HepG2 (cell line): ENCODE measurements at regions of chr17 and their contacts with region 1.

Region 1: GRCh38 chr17:31100840-31101459 is 6.2 kb downstream of the NF1 start:
- DNase-seq: no peak
- ATAC-seq: no peak
- H3K4me3 ChIP-seq: no peak overlapping the region
- H3K27ac ChIP-seq: no peak overlapping the region
- H3K4me1 ChIP-seq: peaks cover 21% of the 10 kb centered on the region
- H3K27me3 ChIP-seq: no peaks in the 10 kb centered on the region
- CTCF ChIP-seq: no peak
- EP300 ChIP-seq: no peak
- POLR2A ChIP-seq: no peak
- RAD21 ChIP-seq: no peak

Region 2: GRCh38 chr17:31068291-31068690 is 32.7 kb before region 1 on chr17:
- CTCF ChIA-PET with region 1: no interaction called
- POLR2A ChIA-PET with region 1: no interaction called
- in situ Hi-C with region 1: no loop called
- intact Hi-C with region 1: loop called (anchors 5 kb)
- DNase-seq: peak; percentile 37
- ATAC-seq: peak; percentile 77
- H3K4me3 ChIP-seq: no peak overlapping the region
- H3K27ac ChIP-seq: no peak overlapping the region
- H3K4me1 ChIP-seq: peaks cover 15% of the 10 kb centered on the region
- H3K27me3 ChIP-seq: no peaks in the 10 kb centered on the region
- CTCF ChIP-seq: peak; percentile 67
- EP300 ChIP-seq: no peak
- POLR2A ChIP-seq: no peak
- RAD21 ChIP-seq: 0 out of 2 replicates have a peak, but pooled peaks have one; percentile 23

Region 3: DNA sequence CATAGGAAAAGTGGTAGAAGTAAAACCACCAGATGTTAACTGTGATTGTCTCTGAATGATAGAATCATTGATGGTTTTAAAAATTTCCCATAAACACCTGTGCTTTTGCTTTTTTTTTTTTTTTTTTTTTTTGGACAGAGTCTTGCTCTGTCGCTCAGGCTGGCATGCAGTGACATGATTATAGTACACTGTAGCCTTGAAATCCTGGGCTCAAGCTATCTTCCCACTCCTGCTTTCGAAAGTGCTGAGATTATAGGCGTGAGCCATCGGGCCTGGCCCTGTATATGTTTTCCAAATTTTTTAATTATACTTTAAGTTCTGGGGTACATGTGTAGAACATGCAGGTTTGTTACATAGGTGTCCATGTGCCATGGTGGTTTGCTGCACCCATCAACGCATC is 74.3 kb after region 1 on chr17:
- CTCF ChIA-PET with region 1: no interaction called
- POLR2A ChIA-PET with region 1: no interaction called
- in situ Hi-C with region 1: no loop called
- intact Hi-C with region 1: no loop called
- DNase-seq: no peak
- ATAC-seq: no peak
- H3K4me3 ChIP-seq: no peak overlapping the region
- H3K27ac ChIP-seq: no peak overlapping the region
- H3K4me1 ChIP-seq: no peaks in the 10 kb centered on the region
- H3K27me3 ChIP-seq: no peaks in the 10 kb centered on the region
- CTCF ChIP-seq: no peak
- EP300 ChIP-seq: no peak
- POLR2A ChIP-seq: no peak
- RAD21 ChIP-seq: no peak